Posterior vena cava (tissue), 2 donors: ENCODE measurements at regions of chr21 and their contacts with region 1.

Region 1: DNA sequence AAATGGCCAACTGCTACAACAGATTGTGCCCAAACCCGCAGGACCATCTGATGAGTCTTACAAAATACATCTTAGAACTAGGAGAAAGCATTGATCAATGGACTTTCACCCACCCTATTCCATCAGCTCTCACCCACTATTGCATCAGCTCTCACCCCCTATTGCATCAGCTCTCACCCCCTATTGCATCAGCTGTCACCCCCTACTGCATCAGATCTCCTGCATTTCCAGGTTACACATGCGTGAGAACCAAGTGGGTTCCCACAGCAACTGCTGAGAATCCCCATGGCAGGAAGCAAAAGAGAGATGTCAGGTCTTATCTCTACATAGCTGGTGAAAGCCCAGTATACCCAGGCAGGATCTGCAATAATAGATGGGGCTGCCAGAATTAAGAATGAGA is 533.5 kb downstream of the LTN1 start:
- DNase-seq: no peak

Region 2: DNA sequence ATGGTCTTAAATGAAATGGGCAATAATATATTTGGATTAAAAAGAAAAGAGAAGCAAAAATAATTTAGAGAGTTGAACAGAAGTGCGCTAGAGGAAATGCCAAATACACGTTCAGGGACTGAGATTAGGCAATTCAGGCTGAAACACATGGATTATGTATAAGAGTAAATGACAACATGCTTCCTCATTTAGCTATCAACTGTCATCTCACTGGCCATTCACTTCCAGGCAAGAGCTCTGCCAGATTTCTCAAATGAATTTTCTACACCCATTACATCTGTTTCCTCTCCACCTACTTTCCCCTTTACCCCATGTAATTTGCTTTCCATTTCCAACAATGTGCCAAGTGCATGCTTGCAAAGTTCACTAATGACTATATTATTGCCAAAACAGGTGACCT is 48.9 kb before region 1 on chr21:
- intact Hi-C with region 1: loop called in 1 of 2 experiments (anchors 2 kb)
- DNase-seq: no peak